Endothelial cell of umbilical vein (primary cell): ENCODE measurements at regions of chr7 and their contacts with region 1.

Region 1: DNA sequence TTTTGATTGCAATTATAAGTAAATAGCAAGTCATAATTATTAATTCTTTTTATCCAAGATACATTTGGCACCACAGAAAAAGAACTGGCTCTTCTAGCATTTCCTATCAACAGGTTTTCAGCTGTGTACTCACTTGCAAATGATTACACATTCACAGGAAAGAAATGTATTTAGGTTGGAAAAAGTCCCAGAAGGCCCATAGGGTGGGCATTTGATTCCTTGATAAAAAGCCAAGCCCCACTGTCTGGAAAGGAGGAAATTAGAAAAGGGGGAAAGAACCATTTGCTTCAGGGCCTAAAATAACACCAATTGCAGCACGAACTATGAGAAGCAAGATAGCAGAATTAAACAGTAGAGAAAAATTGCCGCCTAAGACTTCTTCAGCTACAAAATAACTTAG is 80.8 kb upstream of the COL1A2 start:
- DNase-seq: peak; percentile 96
- H3K4me3 ChIP-seq: peak overlapping the region in 1 of 3 experiments; percentile 33
- H3K27ac ChIP-seq: peak overlapping the region; percentile 78
- H3K4me1 ChIP-seq: peaks cover 34% of the 10 kb centered on the region
- H3K27me3 ChIP-seq: no peaks in the 10 kb centered on the region
- CTCF ChIP-seq: no peak
- POLR2A ChIP-seq: peak; percentile 24

Region 2: GRCh38 chr7:94177441-94177840 is 136.5 kb before region 1 on chr7:
- CTCF ChIA-PET with region 1: no interaction called
- POLR2A ChIA-PET with region 1: no interaction called
- dilution Hi-C with region 1: no loop called
- intact Hi-C with region 1: loop called (anchors 1 kb)
- DNase-seq: peak; percentile 96
- H3K4me3 ChIP-seq: no peak overlapping the region
- H3K27ac ChIP-seq: peak overlapping the region; percentile 89
- H3K4me1 ChIP-seq: peaks cover 67% of the 10 kb centered on the region
- H3K27me3 ChIP-seq: no peaks in the 10 kb centered on the region
- CTCF ChIP-seq: no peak
- POLR2A ChIP-seq: no peak

Region 3: DNA sequence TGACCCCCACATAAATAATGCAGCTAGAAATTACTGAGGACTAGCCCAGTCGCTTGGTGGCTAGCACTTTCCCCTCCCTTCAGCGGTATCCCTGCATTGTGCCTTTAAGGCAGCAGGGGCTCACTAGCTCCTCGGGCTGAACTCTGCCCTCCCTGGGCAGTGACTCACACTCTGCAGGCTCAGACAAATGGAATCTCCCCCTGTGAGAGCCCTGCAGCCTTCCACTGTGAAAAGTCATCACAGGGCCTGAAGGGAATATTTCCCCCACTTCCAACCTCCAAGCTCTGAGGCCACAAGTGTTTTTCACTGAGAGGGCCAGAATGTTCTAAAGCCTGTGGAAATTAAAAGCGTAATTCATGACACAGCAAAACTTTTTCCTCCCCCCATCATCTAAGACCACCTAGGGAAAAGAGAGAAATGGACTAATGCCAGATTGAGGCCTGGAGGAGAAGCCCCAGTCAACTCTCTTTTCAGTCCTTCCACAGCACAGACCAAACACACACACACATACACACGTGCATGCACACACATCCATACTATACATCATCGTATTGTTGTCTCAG is 12.8 kb before region 1 on chr7:
- CTCF ChIA-PET with region 1: interaction called, 43 read pairs
- POLR2A ChIA-PET with region 1: no interaction called
- dilution Hi-C with region 1: no loop called
- intact Hi-C with region 1: loop called (anchors 1 kb)
- DNase-seq: peak; percentile 93
- H3K4me3 ChIP-seq: no peak overlapping the region
- H3K27ac ChIP-seq: peak overlapping the region; percentile 72
- H3K4me1 ChIP-seq: peaks cover 24% of the 10 kb centered on the region
- H3K27me3 ChIP-seq: no peaks in the 10 kb centered on the region
- CTCF ChIP-seq: no peak
- POLR2A ChIP-seq: no peak

Region 4: DNA sequence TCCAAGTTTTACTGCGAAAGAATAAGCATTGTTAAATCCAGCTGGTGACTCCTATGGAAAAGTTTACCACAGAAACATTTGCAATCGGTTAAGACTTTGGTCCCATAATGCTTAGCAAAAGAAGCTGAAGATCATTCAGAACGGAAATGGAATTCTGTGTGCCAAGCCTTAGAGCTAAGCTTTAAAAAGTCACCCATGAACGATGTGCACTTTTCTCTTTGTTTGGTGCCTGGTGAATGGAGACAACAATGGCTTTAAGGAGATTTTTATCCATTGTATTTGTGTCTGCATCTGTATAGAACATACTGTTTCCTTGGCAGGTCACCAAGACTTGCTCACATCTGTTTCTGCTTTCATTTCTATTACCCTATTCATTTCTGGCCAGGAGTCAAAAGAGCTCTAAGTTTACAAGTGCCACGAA is 54.5 kb after region 1 on chr7:
- CTCF ChIA-PET with region 1: interaction called, 5 read pairs
- POLR2A ChIA-PET with region 1: no interaction called
- dilution Hi-C with region 1: no loop called
- intact Hi-C with region 1: loop called (anchors 1 kb)
- DNase-seq: peak; percentile 97
- H3K4me3 ChIP-seq: peak overlapping the region in 1 of 3 experiments; percentile 30
- H3K27ac ChIP-seq: peak overlapping the region; percentile 88
- H3K4me1 ChIP-seq: peaks cover 15% of the 10 kb centered on the region
- H3K27me3 ChIP-seq: no peaks in the 10 kb centered on the region
- CTCF ChIP-seq: no peak
- POLR2A ChIP-seq: no peak

Region 5: DNA sequence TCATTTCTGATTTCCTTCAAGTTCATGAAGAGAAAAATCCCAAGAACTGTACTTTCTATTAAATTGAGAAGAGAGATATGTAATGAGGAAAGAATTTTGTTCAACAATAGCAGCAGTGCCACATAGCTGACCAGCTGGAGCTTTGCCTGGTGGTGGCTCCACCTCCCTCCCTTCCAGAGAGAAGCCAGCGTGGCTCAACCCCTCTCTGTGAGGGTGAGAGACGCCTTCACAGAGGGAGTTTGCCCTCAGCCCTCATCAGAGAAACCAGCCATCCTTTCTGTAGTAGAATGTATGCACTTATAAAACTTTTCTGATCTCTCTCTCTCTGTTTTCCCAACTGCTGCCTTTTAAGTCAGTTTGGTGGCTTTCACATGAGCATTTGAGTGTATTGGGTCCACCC is 60.3 kb after region 1 on chr7:
- CTCF ChIA-PET with region 1: no interaction called
- POLR2A ChIA-PET with region 1: no interaction called
- dilution Hi-C with region 1: no loop called
- intact Hi-C with region 1: loop called (anchors 1 kb)
- DNase-seq: peak; percentile 92
- H3K4me3 ChIP-seq: no peak overlapping the region
- H3K27ac ChIP-seq: peak overlapping the region; percentile 85
- H3K4me1 ChIP-seq: peaks cover 21% of the 10 kb centered on the region
- H3K27me3 ChIP-seq: no peaks in the 10 kb centered on the region
- CTCF ChIP-seq: no peak
- POLR2A ChIP-seq: no peak